ENCODE measurements at regions of chr9 and their contacts with region 1.

Region 1: DNA sequence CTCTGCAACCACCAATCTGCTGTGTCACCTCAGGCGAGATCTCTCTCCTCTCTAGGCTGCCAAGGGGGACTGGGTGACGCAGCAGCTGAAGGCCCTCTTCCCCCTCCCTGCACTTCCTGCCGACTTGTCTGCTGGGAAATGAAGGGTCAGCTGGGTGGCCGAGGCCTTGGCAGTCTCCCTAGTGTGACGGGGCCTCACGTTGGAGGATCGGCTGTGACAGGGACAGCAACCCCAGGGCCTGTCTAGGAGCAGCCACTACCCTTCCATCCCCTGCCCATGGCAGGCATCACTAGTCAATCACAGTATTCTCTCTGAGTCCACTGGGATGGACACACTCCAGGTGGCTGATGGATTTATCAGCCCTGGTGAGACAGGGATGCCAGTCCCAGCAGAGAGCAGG is 107.3 kb upstream of the SARDH start:
- DNase-seq: peak; percentile 86
- H3K4me3 ChIP-seq: no peak overlapping the region
- H3K27ac ChIP-seq: peak overlapping the region; percentile 92
- H3K4me1 ChIP-seq: peaks cover 24% of the 10 kb centered on the region
- H3K27me3 ChIP-seq: no peaks in the 10 kb centered on the region
- CTCF ChIP-seq: no peak
- POLR2A ChIP-seq: no peak

Region 2: GRCh38 chr9:133459476-133460404 is 385.7 kb before region 1 on chr9 and contains the start of gene CACFD1:
- CTCF ChIA-PET with region 1: no interaction called
- POLR2A ChIA-PET with region 1: no interaction called
- dilution Hi-C with region 1: no loop called
- intact Hi-C with region 1: no loop called
- DNase-seq: peak; percentile 95
- H3K4me3 ChIP-seq: peak within 1 kb of the TSS; percentile 50 to 82 (median 63)
- H3K27ac ChIP-seq: peak within 1 kb of the TSS; percentile 68
- H3K4me1 ChIP-seq: peaks cover 9% of the 10 kb centered on the region
- H3K27me3 ChIP-seq: no peaks in the 10 kb centered on the region
- CTCF ChIP-seq: peak in 1 of 2 donors; percentile 5
- POLR2A ChIP-seq: peak; percentile 67
- total RNA-seq, gene CACFD1: 9.7 and 9.8 TPM in 2 replicates

Region 3: GRCh38 chr9:133787754-133788025 is 57.8 kb before region 1 on chr9:
- CTCF ChIA-PET with region 1: no interaction called
- POLR2A ChIA-PET with region 1: no interaction called
- dilution Hi-C with region 1: no loop called
- intact Hi-C with region 1: loop called (anchors 2 kb)
- DNase-seq: no peak
- H3K4me3 ChIP-seq: no peak overlapping the region
- H3K27ac ChIP-seq: no peak overlapping the region
- H3K4me1 ChIP-seq: peaks cover 23% of the 10 kb centered on the region
- H3K27me3 ChIP-seq: no peaks in the 10 kb centered on the region
- CTCF ChIP-seq: no peak
- POLR2A ChIP-seq: no peak